Left ventricle myocardium inferior (tissue), 1 donor: ENCODE measurements at regions of chr9 and their contacts with region 1.

Region 1: DNA sequence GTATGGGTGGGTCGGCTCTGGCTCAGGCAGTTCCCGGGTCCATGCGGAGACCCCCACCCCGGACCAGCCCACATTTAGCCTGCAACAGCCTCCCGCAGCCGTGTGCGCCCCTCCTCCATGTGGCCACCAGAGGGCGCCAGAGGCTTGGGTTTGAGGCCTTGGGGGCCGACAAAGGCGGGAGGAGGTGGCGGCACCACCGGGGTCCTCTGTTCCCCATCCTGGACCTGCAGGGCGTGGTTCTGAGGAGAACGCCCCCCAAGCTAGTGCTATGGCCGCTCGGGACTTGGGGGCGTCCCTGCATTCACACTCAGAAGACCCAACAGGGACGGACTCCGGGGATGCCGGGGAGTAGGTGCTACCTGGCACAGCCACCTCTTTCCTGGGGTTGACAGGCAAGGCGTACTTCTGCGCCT is 16.5 kb downstream of the ASS1 start:
- DNase-seq: peak; percentile 62
- H3K4me3 ChIP-seq: no peak overlapping the region
- H3K27ac ChIP-seq: no peak overlapping the region
- H3K4me1 ChIP-seq: peaks cover 19% of the 10 kb centered on the region
- H3K27me3 ChIP-seq: no peaks in the 10 kb centered on the region
- CTCF ChIP-seq: peak; percentile 94

Region 2: DNA sequence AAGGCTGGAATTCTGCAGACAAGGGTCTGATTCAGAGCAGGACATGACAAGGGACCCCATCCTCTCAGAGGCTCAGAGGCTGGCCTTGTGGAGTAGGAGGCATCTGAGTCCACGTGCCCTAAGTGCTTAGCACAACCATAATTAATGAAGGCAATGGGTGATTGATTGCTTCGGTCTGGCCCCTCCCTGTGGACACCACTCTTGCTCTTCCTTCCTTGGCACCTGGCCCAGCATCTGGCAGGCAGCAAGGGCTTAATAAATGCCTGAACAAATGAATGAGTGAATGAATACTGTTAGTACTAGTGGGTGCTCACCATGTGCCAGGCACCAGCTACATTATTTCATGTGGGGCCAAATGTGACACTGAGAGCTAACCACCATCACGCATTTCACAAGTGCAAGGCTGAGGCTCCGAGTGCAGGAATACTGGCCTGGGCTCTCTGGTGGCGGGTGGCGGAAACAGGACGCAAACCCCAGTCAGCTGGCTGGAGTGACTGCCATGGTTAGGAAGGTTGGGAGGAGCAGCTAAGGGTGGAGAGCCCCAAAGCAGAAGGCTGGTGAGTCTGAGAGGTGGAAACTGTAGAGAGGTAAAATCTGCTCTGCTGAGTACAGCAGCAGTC is 37.2 kb after region 1 on chr9:
- intact Hi-C with region 1: no loop called
- DNase-seq: no peak
- H3K4me3 ChIP-seq: no peak overlapping the region
- H3K27ac ChIP-seq: no peak overlapping the region
- H3K4me1 ChIP-seq: no peaks in the 10 kb centered on the region
- H3K27me3 ChIP-seq: no peaks in the 10 kb centered on the region
- CTCF ChIP-seq: no peak

Region 3: GRCh38 chr9:130682490-130683121 is 221.4 kb after region 1 on chr9:
- intact Hi-C with region 1: loop called (anchors 2 kb)
- DNase-seq: peak; percentile 79
- H3K4me3 ChIP-seq: peak overlapping the region; percentile 72
- H3K27ac ChIP-seq: no peak overlapping the region
- H3K4me1 ChIP-seq: peaks cover 20% of the 10 kb centered on the region
- H3K27me3 ChIP-seq: peaks cover 25% of the 10 kb centered on the region
- CTCF ChIP-seq: peak; percentile 87

Region 4: DNA sequence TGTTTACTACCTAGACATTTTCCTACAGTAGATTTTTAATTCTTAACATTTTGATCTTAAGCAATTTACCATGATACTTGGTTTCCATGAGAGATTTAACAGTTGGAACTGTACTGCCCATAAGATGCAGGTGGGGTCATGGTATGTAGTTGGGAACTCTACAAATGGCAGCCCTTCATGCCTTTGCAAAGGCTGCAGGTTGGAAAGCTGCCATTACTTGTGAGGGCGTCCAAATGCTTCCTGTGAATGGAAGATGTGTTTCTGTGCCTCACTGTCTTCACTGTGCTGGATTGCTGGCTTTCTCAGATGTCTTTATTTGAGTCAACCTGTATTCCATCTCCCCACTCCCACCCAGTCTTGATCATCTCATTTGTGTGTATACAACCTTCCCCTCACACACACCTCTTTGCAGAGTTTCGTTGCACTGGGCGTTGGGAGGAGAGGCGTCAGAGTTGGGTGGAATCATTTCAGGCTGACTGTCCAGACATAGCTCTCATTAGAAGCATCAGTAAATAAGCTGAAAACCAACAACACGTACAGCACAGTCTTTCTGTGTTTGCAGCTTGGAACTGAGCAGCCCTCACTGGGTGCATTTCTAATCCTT is 359.0 kb after region 1 on chr9:
- intact Hi-C with region 1: no loop called
- DNase-seq: no peak
- H3K4me3 ChIP-seq: no peak overlapping the region
- H3K27ac ChIP-seq: no peak overlapping the region
- H3K4me1 ChIP-seq: peaks cover 27% of the 10 kb centered on the region
- H3K27me3 ChIP-seq: no peaks in the 10 kb centered on the region
- CTCF ChIP-seq: no peak